Panc1 (cell line): ENCODE measurements at regions of chr22 and their contacts with region 1.

Region 1: GRCh38 chr22:19232623-19233022 is 54.1 kb upstream of the SLC25A1 start:
- DNase-seq: no peak
- ATAC-seq: no peak
- H3K4me3 ChIP-seq: no peak overlapping the region
- H3K27ac ChIP-seq: no peak overlapping the region
- H3K4me1 ChIP-seq: no peaks in the 10 kb centered on the region
- H3K27me3 ChIP-seq: no peaks in the 10 kb centered on the region
- CTCF ChIP-seq: no peak

Region 2: DNA sequence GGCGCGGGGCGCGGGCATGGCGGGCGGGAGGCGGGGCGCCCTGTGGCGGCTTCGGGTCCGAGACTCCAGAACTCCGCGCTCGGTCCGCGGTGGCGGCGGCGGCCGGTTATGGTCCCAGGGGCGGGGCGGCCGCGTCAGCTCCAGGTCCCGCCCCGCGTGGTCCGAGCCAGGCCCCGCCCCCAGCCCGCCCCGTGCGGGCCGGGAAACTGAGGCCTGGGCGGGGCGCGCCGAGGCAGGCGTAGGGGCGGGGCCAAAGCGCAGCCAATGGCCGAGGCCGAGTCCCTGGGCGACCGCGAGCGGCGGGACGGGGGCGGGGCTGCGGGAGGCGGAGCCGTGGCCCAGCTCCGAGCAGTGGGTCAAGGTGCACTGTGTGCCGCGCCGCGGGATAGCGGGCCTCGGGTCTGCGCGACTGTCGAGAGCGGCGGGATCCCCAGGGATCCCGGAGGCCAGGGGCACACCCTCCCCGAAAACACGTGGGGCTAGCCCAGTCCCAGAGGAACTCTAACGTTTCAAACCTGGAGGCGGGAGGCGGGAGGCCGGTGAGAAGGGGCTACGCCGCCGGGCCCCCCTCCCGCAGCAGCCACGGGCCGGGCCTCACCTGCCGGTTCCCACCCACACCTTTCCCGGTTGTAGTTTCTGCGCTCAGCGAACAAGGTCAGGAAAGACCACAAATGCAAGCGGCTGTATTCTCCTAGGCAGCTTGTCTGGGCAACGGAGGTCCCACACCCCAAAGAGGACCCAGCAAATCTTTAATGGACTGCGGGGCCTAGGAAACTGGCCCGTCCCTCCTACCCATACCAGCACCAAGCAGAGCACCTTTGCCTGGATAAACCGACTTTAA is 53.7 kb before region 1 on chr22 and contains the start of gene SLC25A1:
- CTCF ChIA-PET with region 1: no interaction called
- POLR2A ChIA-PET with region 1: interaction called, 11 read pairs
- in situ Hi-C with region 1: no loop called
- intact Hi-C with region 1: no loop called
- DNase-seq: no peak
- ATAC-seq: peak; percentile 82
- H3K4me3 ChIP-seq: peak within 1 kb of the TSS; percentile 66 to 70
- H3K27ac ChIP-seq: peak within 1 kb of the TSS; percentile 81
- H3K4me1 ChIP-seq: peaks cover 34% of the 10 kb centered on the region
- H3K27me3 ChIP-seq: no peaks in the 10 kb centered on the region
- CTCF ChIP-seq: no peak
- total RNA-seq, gene SLC25A1: 162 TPM

Region 3: DNA sequence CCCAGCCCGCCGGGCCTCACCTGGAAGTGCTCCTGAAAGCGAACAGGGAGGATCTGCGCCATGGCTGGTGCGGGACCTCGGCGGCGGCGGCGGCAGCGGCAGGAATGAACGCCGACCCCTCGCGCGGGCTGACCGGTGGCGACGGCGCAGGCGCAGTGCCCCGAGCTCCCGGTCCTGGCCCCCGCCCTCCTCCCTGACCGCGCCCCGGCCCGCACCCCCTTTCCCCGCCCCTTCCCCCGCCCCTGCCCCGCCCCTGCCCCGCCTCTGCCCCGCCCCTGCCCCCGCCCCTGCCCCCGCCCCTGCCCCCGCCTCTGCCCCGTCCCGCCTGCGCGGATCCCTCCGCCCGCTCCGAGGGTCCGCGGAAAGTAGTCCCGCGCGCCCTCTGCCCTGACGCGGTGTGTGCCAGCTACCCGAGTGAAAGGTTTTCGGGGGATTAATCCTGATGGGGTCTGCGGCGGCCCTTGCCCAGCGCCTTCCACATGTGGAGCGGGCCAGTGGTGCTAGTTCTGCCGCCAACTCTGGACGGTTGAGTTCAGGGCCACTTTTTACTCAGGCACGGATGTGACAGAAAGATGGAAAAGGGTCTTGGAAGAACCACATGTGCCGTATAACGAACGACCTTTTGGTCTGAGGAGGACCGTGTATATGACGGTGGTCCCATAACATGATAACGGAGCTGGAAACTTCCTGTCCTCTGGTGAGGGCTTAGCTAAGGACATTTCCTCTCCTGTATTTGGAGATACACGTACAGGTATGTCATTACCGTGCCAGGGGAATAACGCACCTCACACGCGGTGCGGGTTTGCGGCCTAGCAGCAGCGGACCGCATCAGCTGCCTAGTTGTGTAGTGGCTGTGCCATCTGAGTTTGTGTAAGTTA is 59.2 kb after region 1 on chr22 and contains the start of gene CLTCL1:
- CTCF ChIA-PET with region 1: no interaction called
- POLR2A ChIA-PET with region 1: no interaction called
- in situ Hi-C with region 1: no loop called
- intact Hi-C with region 1: loop called (anchors 10 kb)
- DNase-seq: no peak
- ATAC-seq: peak; percentile 84
- H3K4me3 ChIP-seq: peak within 1 kb of the TSS; percentile 75 to 88
- H3K27ac ChIP-seq: peak within 1 kb of the TSS; percentile 86
- H3K4me1 ChIP-seq: peaks cover 9% of the 10 kb centered on the region
- H3K27me3 ChIP-seq: no peaks in the 10 kb centered on the region
- CTCF ChIP-seq: no peak
- total RNA-seq, gene CLTCL1: 11.9 TPM

Region 4: DNA sequence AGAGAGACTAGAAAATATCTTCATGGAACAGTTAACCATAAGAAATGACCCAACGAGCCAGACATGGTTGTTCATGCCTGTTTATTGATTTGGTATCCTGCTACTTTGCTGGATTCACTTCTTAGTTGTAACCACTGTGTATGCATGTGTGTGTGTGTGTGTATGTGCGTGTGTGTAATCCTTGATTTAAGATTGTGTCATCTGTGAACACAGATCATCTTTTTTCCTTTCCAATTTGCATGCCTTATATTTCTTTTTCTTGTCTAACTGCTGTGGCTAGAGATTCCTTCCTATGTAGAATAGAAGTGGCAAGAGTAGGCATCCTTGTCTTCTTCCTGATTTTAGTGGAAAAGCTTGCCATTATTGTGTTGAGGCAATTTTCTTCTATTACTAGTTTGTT is 75.2 kb after region 1 on chr22:
- CTCF ChIA-PET with region 1: no interaction called
- POLR2A ChIA-PET with region 1: no interaction called
- in situ Hi-C with region 1: no loop called
- intact Hi-C with region 1: no loop called
- DNase-seq: no peak
- ATAC-seq: no peak
- H3K4me3 ChIP-seq: no peak overlapping the region
- H3K27ac ChIP-seq: no peak overlapping the region
- H3K4me1 ChIP-seq: no peaks in the 10 kb centered on the region
- H3K27me3 ChIP-seq: no peaks in the 10 kb centered on the region
- CTCF ChIP-seq: no peak

Region 5: DNA sequence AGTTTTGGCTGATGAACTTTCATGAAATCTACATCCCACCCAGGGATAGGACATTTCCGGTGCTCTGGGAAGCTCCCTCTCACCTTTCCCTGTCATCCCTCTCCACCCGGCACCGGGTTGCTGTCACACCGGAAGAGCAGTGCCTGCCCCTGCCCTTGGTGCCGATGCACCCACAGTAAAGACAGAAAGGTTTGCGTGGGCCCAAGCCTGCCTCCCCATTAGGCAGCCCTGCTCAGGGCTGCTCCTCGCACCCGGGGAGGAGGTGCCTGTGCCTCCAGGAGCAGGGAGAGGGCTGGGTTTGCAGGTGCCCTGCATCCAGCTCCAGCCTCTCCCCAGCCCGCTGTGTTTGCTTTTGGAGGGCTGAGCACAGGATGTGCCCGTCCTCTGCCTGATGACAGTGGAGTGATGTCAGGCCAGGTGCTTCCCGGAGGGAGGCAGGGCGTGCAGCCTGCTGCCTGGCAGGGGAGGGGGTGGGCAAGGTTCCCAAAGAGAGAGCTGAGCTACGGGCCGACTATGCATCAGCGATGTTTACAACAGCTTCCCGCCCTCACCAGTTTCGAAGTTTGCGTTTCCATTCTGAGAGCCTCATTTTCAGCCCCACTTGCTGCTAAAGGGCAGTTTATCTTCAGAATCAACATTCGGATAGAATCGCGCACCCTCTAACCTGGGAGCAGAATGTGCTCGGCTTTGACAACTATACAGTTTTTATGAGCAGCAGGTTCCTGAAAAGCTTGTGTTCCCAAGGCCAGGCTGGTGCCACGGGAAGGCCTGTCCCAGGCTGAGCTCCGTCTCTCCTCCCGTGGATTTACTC is 374.8 kb after region 1 on chr22:
- CTCF ChIA-PET with region 1: no interaction called
- POLR2A ChIA-PET with region 1: no interaction called
- in situ Hi-C with region 1: no loop called
- intact Hi-C with region 1: no loop called
- DNase-seq: no peak
- ATAC-seq: no peak
- H3K4me3 ChIP-seq: no peak overlapping the region
- H3K27ac ChIP-seq: no peak overlapping the region
- H3K4me1 ChIP-seq: no peaks in the 10 kb centered on the region
- H3K27me3 ChIP-seq: no peaks in the 10 kb centered on the region
- CTCF ChIP-seq: no peak